ENCODE measurements at regions of chr1 and their contacts with region 1.

Region 1: DNA sequence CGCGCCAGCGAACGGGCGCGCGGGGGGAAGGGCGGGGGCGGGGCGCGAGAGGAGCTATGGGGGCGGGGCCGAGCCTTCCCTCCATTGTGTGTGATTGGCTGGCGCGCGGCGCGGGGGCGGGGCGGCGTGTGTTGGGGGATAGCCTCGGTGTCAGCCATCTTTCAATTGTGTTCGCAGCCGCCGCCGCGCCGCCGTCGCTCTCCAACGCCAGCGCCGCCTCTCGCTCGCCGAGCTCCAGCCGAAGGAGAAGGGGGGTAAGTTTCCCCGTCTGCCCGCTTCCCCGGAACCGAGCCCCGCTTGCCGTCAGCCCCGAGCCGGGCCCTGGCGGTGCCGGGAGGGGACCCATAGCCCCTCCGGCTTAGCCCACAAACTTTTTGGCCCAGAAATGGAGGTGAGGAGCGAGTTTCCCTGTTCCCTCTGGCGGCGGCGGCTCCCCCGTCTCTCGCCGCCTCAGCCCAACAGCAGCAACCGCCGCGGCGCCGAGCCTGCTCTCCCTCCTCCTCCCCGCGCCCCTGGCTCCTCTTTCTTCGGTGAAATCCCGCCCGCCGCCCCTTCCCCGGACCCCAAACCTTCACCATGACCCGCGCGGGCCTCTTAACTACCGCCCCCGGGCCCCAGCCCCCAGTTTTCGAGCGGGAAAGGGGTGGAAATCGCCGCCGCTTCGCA is at the start of gene H3-3A:
- DNase-seq: peak; percentile 97
- H3K4me3 ChIP-seq: peak within 1 kb of the TSS; percentile 76
- H3K27ac ChIP-seq: peak within 1 kb of the TSS; percentile 99
- H3K4me1 ChIP-seq: peaks cover 21% of the 10 kb centered on the region
- H3K27me3 ChIP-seq: no peaks in the 10 kb centered on the region
- CTCF ChIP-seq: 0 out of 2 replicates have a peak, but pooled peaks have one; percentile 18
- total RNA-seq, gene H3-3A: 638 and 640 TPM in 2 replicates

Region 2: GRCh38 chr1:225845571-225846259 is 217.0 kb before region 1 on chr1:
- CTCF ChIA-PET with region 1: no interaction called
- POLR2A ChIA-PET with region 1: no interaction called
- intact Hi-C with region 1: no loop called
- DNase-seq: peak; percentile 87
- H3K4me3 ChIP-seq: no peak overlapping the region
- H3K27ac ChIP-seq: no peak overlapping the region
- H3K4me1 ChIP-seq: no peaks in the 10 kb centered on the region
- H3K27me3 ChIP-seq: no peaks in the 10 kb centered on the region
- CTCF ChIP-seq: peak; percentile 85

Region 3: GRCh38 chr1:225923692-225924555 is 138.8 kb before region 1 on chr1 and contains the start of gene PYCR2:
- CTCF ChIA-PET with region 1: no interaction called
- POLR2A ChIA-PET with region 1: interaction called, 12 read pairs
- intact Hi-C with region 1: no loop called
- DNase-seq: peak; percentile 98
- H3K4me3 ChIP-seq: peak within 1 kb of the TSS; percentile 99
- H3K27ac ChIP-seq: peak within 1 kb of the TSS; percentile 97
- H3K4me1 ChIP-seq: peaks cover 33% of the 10 kb centered on the region
- H3K27me3 ChIP-seq: no peaks in the 10 kb centered on the region
- CTCF ChIP-seq: no peak
- total RNA-seq, gene PYCR2: 49.5 and 52.5 TPM in 2 replicates

Region 4: GRCh38 chr1:225999227-225999911 is 63.3 kb before region 1 on chr1 and contains the start of gene SDE2:
- CTCF ChIA-PET with region 1: interaction called, 7 read pairs
- POLR2A ChIA-PET with region 1: interaction called, 14 read pairs
- intact Hi-C with region 1: loop called (anchors 1 kb)
- DNase-seq: peak; percentile 99
- H3K4me3 ChIP-seq: peak within 1 kb of the TSS; percentile 92
- H3K27ac ChIP-seq: peak within 1 kb of the TSS; percentile 87
- H3K4me1 ChIP-seq: peaks cover 41% of the 10 kb centered on the region
- H3K27me3 ChIP-seq: no peaks in the 10 kb centered on the region
- CTCF ChIP-seq: no peak
- total RNA-seq, gene SDE2: 26.7 and 27.7 TPM in 2 replicates

Region 5: GRCh38 chr1:226109829-226110248 is 47.1 kb after region 1 on chr1:
- CTCF ChIA-PET with region 1: interaction called, 6 read pairs
- POLR2A ChIA-PET with region 1: no interaction called
- intact Hi-C with region 1: loop called (anchors 2 kb)
- DNase-seq: peak; percentile 96
- H3K4me3 ChIP-seq: peak overlapping the region; percentile 76
- H3K27ac ChIP-seq: peak overlapping the region; percentile 95
- H3K4me1 ChIP-seq: peaks cover 32% of the 10 kb centered on the region
- H3K27me3 ChIP-seq: no peaks in the 10 kb centered on the region
- CTCF ChIP-seq: no peak

Region 6: GRCh38 chr1:226195144-226195543 is 132.5 kb after region 1 on chr1:
- CTCF ChIA-PET with region 1: interaction called, 3 read pairs
- POLR2A ChIA-PET with region 1: no interaction called
- intact Hi-C with region 1: loop called (anchors 10 kb)
- DNase-seq: no peak
- H3K4me3 ChIP-seq: no peak overlapping the region
- H3K27ac ChIP-seq: no peak overlapping the region
- H3K4me1 ChIP-seq: no peaks in the 10 kb centered on the region
- H3K27me3 ChIP-seq: no peaks in the 10 kb centered on the region
- CTCF ChIP-seq: no peak

Region 7: GRCh38 chr1:226496453-226497015 is 433.8 kb after region 1 on chr1:
- CTCF ChIA-PET with region 1: no interaction called
- POLR2A ChIA-PET with region 1: no interaction called
- intact Hi-C with region 1: no loop called
- DNase-seq: no peak
- H3K4me3 ChIP-seq: no peak overlapping the region
- H3K27ac ChIP-seq: no peak overlapping the region
- H3K4me1 ChIP-seq: peaks cover 6% of the 10 kb centered on the region
- H3K27me3 ChIP-seq: no peaks in the 10 kb centered on the region
- CTCF ChIP-seq: no peak

Region 8: GRCh38 chr1:227111782-227112181 is 1049.1 kb after region 1 on chr1:
- CTCF ChIA-PET with region 1: no interaction called
- POLR2A ChIA-PET with region 1: no interaction called
- intact Hi-C with region 1: no loop called
- DNase-seq: no peak
- H3K4me3 ChIP-seq: no peak overlapping the region
- H3K27ac ChIP-seq: no peak overlapping the region
- H3K4me1 ChIP-seq: no peaks in the 10 kb centered on the region
- H3K27me3 ChIP-seq: no peaks in the 10 kb centered on the region
- CTCF ChIP-seq: no peak